Panc1 (cell line): ENCODE measurements at regions of chr9 and their contacts with region 1.

Region 1: GRCh38 chr9:114988962-114989599 is 58.7 kb upstream of the TNFSF8 start:
- DNase-seq: no peak
- ATAC-seq: no peak
- H3K4me3 ChIP-seq: no peak overlapping the region
- H3K27ac ChIP-seq: no peak overlapping the region
- H3K4me1 ChIP-seq: no peaks in the 10 kb centered on the region
- H3K27me3 ChIP-seq: no peaks in the 10 kb centered on the region
- CTCF ChIP-seq: no peak

Region 2: DNA sequence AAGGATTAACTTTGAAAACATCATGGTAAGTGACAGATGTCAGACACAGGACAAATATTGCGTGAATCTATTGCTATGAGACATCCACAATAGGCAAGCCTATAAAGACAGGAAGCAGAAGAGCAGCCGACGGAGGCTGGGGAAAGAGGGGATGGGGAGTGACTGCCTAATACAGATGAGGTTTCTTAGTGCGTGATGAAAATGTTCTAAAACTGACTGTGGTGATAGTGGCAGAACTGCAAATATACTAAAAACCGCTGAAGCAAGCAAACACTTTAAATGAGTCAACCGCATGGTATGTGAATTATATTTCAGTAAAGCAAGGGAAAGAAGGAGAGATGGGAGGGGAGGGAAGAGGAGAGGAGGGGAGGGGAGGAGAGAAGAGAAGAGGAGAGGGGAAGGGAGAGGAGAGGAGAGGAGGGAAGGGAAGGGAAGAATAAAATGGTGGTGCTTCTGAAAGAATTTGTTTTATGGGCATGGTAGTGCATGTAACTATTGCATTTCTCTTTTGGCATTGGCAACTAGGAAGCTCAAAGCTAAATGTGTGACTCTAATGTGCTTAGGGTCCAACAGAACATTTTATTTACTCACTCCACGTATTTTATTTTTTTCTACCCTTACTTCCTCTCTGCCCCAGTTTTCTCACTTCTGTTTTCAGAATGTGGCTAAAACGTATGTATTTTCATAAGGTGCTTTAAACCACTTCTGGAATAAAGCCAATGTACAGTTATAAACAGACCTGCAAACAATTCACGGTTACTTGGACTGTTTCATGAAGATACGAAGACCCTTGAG is 622.5 kb before region 1 on chr9:
- CTCF ChIA-PET with region 1: no interaction called
- POLR2A ChIA-PET with region 1: no interaction called
- in situ Hi-C with region 1: no loop called
- intact Hi-C with region 1: no loop called
- DNase-seq: no peak
- ATAC-seq: peak; percentile 70
- H3K4me3 ChIP-seq: no peak overlapping the region
- H3K27ac ChIP-seq: no peak overlapping the region
- H3K4me1 ChIP-seq: peaks cover 3% of the 10 kb centered on the region
- H3K27me3 ChIP-seq: no peaks in the 10 kb centered on the region
- CTCF ChIP-seq: no peak

Region 3: DNA sequence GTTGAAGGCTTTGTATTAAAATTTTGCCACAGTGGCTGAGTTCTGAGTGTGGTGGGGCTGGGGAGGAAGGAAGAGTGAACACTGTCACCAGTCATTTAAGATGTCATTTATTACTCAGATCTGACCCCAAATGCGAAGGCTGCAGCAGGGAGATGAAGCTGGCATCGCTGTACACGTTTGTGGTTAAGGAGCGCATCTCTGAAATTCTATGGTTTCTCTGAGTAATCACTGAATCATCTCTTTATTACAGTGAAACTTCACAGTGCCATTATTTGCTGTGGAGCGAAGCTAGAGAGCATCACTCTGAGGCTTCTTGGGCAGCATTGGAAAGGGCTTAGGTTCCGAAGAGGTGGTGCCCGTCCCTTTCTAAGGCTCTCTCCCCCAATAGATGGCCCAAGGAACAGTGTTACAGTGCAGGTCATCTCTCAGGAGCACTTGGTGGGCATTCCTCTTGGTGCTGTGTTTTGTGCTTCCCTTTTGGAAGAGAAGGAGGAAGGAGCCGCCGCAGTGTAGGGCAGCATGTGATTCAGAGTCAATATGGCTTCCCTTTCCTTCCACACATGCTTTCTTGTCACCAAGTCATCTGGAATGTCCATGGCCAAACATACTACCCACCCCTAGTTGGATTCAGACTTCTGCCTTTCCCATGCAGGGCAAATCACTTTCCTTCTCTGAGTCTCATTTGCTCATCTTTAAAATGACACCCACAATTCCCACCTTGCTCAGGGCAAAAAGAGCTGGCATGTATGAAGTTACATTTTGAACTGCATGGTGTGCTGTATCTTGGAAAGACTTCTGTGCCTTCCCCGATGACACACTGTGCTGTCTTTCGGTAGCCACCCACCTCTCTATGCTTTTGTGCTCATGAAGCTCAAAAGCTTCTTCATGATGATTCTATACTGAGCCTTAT is 297.8 kb before region 1 on chr9:
- CTCF ChIA-PET with region 1: no interaction called
- POLR2A ChIA-PET with region 1: no interaction called
- in situ Hi-C with region 1: no loop called
- intact Hi-C with region 1: no loop called
- DNase-seq: peak; percentile 78
- ATAC-seq: peak; percentile 92
- H3K4me3 ChIP-seq: peak overlapping the region in 1 of 2 experiments; percentile 9; a peak in 1 of 4 replicates
- H3K27ac ChIP-seq: no peak overlapping the region
- H3K4me1 ChIP-seq: no peaks in the 10 kb centered on the region
- H3K27me3 ChIP-seq: no peaks in the 10 kb centered on the region
- CTCF ChIP-seq: no peak

Region 4: DNA sequence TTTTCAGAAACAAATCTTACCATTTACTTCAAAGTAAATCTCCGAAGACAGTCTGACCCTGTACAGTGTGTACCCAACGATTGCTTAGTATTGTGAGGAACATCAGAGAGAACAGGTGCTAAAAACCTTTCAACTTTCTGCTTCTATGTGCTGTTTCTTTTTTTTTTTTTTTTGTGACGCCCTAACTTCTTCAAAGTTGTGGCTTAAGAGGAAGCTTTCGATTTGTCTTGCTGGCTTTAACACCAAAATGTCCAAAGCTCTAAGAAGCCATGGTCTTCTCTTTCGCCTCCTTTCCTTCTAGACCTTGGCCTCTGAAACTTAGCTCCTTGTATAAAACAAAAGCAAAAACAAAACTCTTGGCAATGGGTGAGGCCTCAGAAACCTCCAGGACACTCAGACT is 59.9 kb before region 1 on chr9:
- CTCF ChIA-PET with region 1: no interaction called
- POLR2A ChIA-PET with region 1: interaction called, 10 read pairs
- in situ Hi-C with region 1: no loop called
- intact Hi-C with region 1: no loop called
- DNase-seq: no peak
- ATAC-seq: no peak
- H3K4me3 ChIP-seq: no peak overlapping the region
- H3K27ac ChIP-seq: no peak overlapping the region
- H3K4me1 ChIP-seq: no peaks in the 10 kb centered on the region
- H3K27me3 ChIP-seq: no peaks in the 10 kb centered on the region
- CTCF ChIP-seq: no peak